HEK293T (cell line): ENCODE measurements at regions of chr1 and their contacts with region 1.

Region 1: DNA sequence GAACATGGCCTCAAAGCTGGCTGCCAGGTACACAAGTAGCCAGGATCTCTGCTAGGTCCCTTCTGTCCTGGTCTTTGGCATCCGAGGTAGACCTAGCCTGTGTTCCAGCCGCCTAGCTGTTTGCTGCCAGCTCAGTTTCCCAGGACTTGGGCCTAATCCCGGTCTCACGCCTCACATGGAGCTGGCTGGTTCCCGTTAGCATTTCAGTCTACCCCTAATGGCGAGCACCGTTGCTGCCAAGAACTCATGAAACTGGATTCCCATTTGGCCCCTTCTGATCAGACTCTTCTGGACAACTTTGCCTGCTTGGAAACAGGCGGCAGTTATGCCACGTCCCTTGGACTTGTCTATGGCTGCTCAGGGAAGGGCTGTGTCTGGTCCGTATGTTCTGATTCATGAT is 26.2 kb upstream of the HHAT start:
- DNase-seq: no peak

Region 2: DNA sequence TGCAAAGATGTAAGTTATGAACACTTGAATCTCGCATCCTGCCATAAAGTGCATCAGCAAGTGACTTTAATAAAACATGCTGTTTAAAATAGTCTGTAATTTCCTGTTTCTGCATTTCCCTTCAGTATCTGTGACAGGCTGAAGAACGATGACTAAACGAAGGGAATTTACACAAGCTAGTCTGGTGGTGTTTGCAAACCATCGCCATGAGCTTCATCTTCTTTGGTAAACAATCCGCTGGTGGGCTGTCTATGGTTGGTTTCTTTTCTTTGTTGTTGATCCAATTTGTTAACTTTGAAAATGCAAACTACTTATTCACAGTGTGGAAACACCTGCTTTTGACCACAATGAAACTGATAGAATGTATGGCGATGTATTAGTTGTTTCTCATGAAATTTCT is 56.1 kb before region 1 on chr1:
- CTCF ChIA-PET with region 1: interaction called, 11 read pairs
- POLR2A ChIA-PET with region 1: interaction called, 3 read pairs
- DNase-seq: no peak

Region 3: GRCh38 chr1:210257698-210258529 is 44.6 kb before region 1 on chr1:
- CTCF ChIA-PET with region 1: no interaction called
- POLR2A ChIA-PET with region 1: no interaction called
- DNase-seq: no peak